Mammary epithelial cell (primary cell): ENCODE measurements at regions of chr2 and their contacts with region 1.

Region 1: GRCh38 chr2:147867050-147867449 is 22.2 kb downstream of the ACVR2A start:
- DNase-seq: no peak
- H3K4me3 ChIP-seq: no peak overlapping the region
- H3K27ac ChIP-seq: no peak overlapping the region
- H3K4me1 ChIP-seq: peaks cover 4% of the 10 kb centered on the region
- H3K27me3 ChIP-seq: no peaks in the 10 kb centered on the region
- CTCF ChIP-seq: no peak

Region 2: DNA sequence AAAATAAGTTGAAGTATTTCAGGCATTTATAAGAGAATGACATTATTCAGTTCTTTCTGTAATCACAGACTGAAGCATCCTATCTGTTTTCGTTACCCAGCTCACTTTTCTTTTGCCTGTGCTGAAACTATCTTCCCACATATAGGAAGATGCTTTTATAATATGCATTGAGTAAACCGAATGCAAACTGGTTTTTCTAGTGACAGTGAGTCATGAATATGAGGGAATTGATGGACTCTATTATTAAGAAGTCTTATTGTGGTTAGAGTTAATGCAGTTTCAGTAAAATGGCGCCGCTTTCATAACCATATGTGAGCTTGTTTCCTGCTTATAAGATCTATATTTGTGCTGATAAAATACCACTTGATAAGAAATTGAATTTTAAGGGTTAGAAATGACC is 37.0 kb after region 1 on chr2:
- CTCF ChIA-PET with region 1: no interaction called
- dilution Hi-C with region 1: loop called (anchors 5 kb)
- in situ Hi-C with region 1: no loop called
- intact Hi-C with region 1: no loop called
- DNase-seq: peak; percentile 35
- H3K4me3 ChIP-seq: no peak overlapping the region
- H3K27ac ChIP-seq: no peak overlapping the region
- H3K4me1 ChIP-seq: no peaks in the 10 kb centered on the region
- H3K27me3 ChIP-seq: no peaks in the 10 kb centered on the region
- CTCF ChIP-seq: no peak